Heart left ventricle (tissue), 16 donors: ENCODE measurements at regions of chr15 and their contacts with region 1.

Region 1: DNA sequence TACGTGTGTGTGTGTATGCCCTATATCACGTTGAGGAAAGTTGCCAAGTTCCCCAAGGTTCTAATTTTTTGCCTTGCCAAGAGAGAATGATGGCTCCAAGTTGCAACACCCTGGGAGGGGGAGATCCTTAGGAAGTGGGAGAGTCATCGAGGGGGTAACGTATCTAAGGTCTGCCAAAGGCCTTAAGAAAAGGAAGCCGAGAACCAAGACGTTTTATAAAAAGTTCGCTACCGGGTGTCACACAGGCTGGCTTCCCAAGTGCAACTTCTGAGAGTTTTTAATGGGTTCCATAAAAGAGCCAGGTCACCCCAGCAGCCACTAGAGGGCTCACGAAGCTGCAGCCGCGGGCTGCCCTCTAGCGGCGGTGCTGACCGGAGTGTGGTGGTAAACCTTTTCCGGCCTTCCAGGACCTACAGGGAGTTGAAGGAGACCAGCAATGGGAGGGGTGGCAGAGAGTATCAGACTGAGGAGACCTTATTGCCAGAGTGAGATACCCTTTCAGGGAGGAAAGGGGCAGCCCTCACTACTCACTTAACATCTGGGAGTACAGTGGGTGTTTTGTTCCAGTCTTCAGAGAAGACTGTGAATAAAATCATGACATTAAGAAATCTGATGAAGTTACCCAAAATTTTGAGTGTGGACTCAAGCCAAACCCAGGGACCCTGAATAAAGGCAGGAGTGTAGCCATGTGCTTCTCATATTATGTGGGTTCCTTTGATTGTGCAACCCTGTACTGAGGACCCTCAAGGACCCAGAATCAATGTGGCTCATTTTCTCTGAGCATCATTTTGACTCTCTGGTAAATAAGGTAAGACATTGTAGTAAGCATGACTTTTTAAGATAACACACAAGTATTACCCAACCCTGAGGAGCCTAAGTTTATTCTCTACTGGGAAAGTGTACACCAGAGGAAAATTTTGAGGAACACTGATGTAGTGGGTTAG is 2.5 kb upstream of the RFX7 start:
- DNase-seq: peak; percentile 87 to 94 (median 90)
- ATAC-seq: peak; percentile 72 to 86 (median 83)
- H3K4me3 ChIP-seq: peak overlapping the region in 10 of 12 donors; percentile 7 to 79 (median 45)
- H3K27ac ChIP-seq: peak overlapping the region in 11 of 12 donors; percentile 1 to 94 (median 48)
- H3K4me1 ChIP-seq: peaks cover 0 to 34% (median 23%) of the 10 kb centered on the region in 12 donors
- H3K27me3 ChIP-seq: no peaks in the 10 kb centered on the region
- CTCF ChIP-seq: peak; percentile 98 to 100 (median 100)
- POLR2A ChIP-seq: no peak

Region 2: DNA sequence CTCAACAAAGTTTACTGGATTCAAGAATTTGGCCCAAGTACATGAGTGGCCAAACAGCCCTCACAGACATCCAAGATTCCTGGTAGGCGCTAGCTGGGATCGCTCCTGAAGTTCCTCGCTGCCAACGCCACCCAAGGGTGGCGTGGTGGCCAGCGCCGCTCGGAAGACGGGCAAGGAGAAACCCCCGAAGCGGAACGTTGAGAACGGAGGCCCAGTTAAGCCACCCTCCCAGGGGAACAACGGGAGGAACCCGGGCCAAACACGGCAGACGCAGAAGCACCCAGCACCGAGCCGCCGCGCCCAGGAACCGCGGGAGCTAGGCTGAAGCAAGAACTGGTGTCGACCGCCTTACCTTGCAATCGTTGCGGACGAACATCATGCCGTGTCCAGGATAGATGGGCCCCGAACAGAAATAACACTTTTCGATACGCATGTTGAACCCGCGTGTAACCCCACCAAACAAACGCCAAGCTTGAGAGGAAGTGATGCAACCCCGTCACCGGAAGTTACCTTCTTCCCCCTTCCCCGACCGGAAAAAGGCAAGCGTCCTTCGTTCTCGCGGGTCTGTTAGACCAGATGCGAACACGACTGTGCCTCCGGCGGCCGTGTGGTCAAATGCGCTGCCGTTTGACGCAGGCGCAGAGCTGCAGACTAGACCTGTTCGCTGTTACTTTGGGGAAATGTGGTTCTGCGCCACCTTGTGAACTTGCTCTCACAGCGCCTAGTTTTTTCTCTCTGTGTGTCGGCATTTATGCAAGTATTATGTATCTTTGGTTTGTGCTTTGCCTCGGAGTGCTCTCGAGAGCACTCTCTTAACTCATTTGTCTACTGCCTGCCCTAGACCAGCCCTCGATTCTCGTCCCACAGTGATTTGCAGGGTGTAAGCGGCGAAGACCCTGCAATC is 1049.4 kb before region 1 on chr15 and contains the start of gene RSL24D1:
- intact Hi-C with region 1: loop called in 1 of 10 experiments (anchors 5 kb)
- DNase-seq: peak; percentile 96 to 98 (median 96)
- ATAC-seq: peak; percentile 99 to 100 (median 100)
- H3K4me3 ChIP-seq: peak within 1 kb of the TSS; percentile 63 to 97 (median 80)
- H3K27ac ChIP-seq: peak within 1 kb of the TSS; percentile 78 to 93 (median 90)
- H3K4me1 ChIP-seq: peaks cover 0 to 43% (median 26%) of the 10 kb centered on the region in 12 donors
- H3K27me3 ChIP-seq: no peaks in the 10 kb centered on the region
- CTCF ChIP-seq: peak in 10 of 12 donors; percentile 13 to 63 (median 44)
- POLR2A ChIP-seq: peak in 1 of 2 donors; percentile 76
- total RNA-seq, gene RSL24D1: 25.5 to 51.5 (median 39.2) TPM

Region 3: GRCh38 chr15:56098195-56098863 is 147.8 kb before region 1 on chr15:
- intact Hi-C with region 1: loop called in 7 of 10 experiments (anchors 5 to 10 kb)
- DNase-seq: no peak
- ATAC-seq: no peak
- H3K4me3 ChIP-seq: no peak overlapping the region
- H3K27ac ChIP-seq: no peak overlapping the region
- H3K4me1 ChIP-seq: peaks cover 0 to 15% (median 6%) of the 10 kb centered on the region in 12 donors
- H3K27me3 ChIP-seq: no peaks in the 10 kb centered on the region
- CTCF ChIP-seq: peak in 1 of 12 donors; percentile 14
- POLR2A ChIP-seq: no peak

Region 4: DNA sequence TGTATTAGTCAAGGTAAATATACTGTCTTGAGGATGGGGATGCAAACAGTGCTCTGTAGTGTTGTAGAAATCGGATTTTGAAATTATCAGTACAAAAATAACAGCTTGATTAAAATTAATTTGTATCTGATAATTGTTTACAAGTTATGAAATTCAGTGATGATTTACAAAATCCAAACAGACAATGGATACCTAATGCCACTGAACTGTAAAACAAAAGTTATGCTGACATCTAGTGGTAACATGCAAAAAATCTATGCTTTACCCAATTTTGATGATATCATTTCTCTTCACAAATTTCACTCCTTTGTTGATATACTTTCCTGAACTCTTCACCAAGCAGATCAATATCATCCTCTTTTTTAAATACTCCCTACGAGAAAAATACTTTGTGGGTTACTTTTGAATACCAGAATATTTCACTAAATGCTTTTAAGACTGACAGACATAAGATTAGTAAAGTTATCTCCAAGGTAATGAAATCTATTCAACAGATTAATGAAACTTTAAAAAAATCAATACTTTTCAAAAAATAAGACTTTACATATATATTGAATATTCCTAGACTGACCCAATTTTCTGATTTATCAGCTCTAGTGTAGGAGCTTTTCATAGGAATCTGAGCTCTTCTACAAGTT is 182.8 kb after region 1 on chr15:
- intact Hi-C with region 1: loop called in 8 of 10 experiments (anchors 2 to 10 kb)
- DNase-seq: no peak
- ATAC-seq: no peak
- H3K4me3 ChIP-seq: no peak overlapping the region
- H3K27ac ChIP-seq: no peak overlapping the region
- H3K4me1 ChIP-seq: no peaks in the 10 kb centered on the region
- H3K27me3 ChIP-seq: no peaks in the 10 kb centered on the region
- CTCF ChIP-seq: peak in 10 of 12 donors; percentile 34 to 64 (median 46)
- POLR2A ChIP-seq: no peak